HCT116 (cell line): ENCODE measurements at regions of chr1 and their contacts with region 1.

Region 1: DNA sequence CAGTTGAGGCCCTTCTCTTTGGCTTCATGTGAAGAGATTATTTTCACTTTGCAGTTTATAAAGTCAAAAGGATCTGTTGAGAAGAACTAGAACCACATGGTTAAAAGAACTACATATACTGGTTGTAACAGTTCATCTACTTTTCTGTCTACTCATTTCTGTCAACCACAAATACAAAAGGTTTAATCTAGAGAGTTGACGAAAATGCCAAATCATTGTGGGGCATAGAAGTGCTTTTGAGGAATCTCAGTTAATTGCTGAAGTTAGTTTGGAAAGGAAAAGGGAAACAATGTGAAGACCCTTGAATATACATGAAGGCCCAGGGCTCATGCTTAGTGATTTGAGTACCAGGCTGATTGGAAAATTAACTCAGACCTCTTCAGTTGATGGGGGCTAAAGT is 415.7 kb upstream of the ZP4 start:
- DNase-seq: no peak
- ATAC-seq: no peak
- H3K4me3 ChIP-seq: no peak overlapping the region
- H3K27ac ChIP-seq: no peak overlapping the region
- H3K4me1 ChIP-seq: no peaks in the 10 kb centered on the region
- H3K27me3 ChIP-seq: no peaks in the 10 kb centered on the region
- CTCF ChIP-seq: no peak
- POLR2A ChIP-seq: no peak
- RAD21 ChIP-seq: no peak

Region 2: GRCh38 chr1:237327061-237327460 is 979.4 kb before region 1 on chr1:
- CTCF ChIA-PET with region 1: no interaction called
- POLR2A ChIA-PET with region 1: no interaction called
- RAD21 ChIA-PET with region 1: no interaction called
- intact Hi-C with region 1: loop called (anchors 10 kb)
- DNase-seq: no peak
- ATAC-seq: no peak
- H3K4me3 ChIP-seq: no peak overlapping the region
- H3K27ac ChIP-seq: no peak overlapping the region
- H3K4me1 ChIP-seq: no peaks in the 10 kb centered on the region
- H3K27me3 ChIP-seq: no peaks in the 10 kb centered on the region
- CTCF ChIP-seq: no peak
- POLR2A ChIP-seq: no peak
- RAD21 ChIP-seq: no peak

Region 3: GRCh38 chr1:238191170-238191569 is 115.2 kb before region 1 on chr1:
- CTCF ChIA-PET with region 1: no interaction called
- POLR2A ChIA-PET with region 1: no interaction called
- RAD21 ChIA-PET with region 1: no interaction called
- intact Hi-C with region 1: no loop called
- DNase-seq: no peak
- ATAC-seq: no peak
- H3K4me3 ChIP-seq: no peak overlapping the region
- H3K27ac ChIP-seq: no peak overlapping the region
- H3K4me1 ChIP-seq: no peaks in the 10 kb centered on the region
- H3K27me3 ChIP-seq: no peaks in the 10 kb centered on the region
- CTCF ChIP-seq: no peak
- POLR2A ChIP-seq: no peak
- RAD21 ChIP-seq: no peak